Activated naive CD4-positive, alpha-beta T cell treated with anti-CD3 and anti-CD28 coated beads for 36 hours (primary cell): ENCODE measurements at regions of chr2 and their contacts with region 1.

Region 1: GRCh38 chr2:191245046-191245868 is at the start of gene MYO1B:
- DNase-seq: peak; percentile 79
- H3K4me3 Mint-ChIP-seq: peak within 1 kb of the TSS; percentile 82
- H3K27ac Mint-ChIP-seq: peak within 1 kb of the TSS; percentile 22
- H3K4me1 Mint-ChIP-seq: peaks cover 21% of the 10 kb centered on the region
- H3K27me3 Mint-ChIP-seq: no peaks in the 10 kb centered on the region
- total RNA-seq, gene MYO1B: 39.2 to 40.5 TPM

Region 2: DNA sequence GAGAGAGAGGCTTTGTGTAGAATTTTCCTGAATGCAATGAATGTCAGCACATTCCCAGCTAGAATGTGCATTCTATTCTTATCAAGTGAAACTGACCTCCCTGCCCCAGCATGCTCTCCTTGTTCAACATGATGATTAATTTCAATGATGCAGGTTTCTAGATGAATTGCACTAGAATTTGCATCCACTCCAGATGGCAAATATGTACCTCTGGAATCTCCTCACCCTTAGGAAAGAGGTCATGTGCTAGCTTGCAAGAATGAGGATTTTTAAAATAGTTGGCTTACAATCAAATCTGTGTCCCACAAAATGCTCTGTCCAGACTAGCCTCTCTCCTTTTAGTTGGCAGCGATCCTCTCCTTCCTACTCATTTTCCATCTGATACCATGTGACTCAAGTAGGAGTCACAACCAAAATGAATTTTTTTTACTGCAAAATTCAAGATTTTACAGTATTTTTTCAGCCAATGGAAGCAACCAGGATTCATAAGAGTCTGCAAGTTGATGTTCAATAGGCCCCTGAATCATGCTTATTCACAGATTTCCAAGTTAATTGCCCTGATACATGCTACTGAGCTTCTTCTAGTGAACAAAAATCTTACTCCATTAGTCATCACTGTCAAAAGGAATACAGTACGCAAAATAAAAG is 73.4 kb before region 1 on chr2:
- CTCF ChIA-PET with region 1: no interaction called
- intact Hi-C with region 1: loop called (anchors 2 kb)
- DNase-seq: no peak
- H3K4me3 Mint-ChIP-seq: no peak overlapping the region
- H3K27ac Mint-ChIP-seq: peak overlapping the region; percentile 38
- H3K4me1 Mint-ChIP-seq: peaks cover 75% of the 10 kb centered on the region
- H3K27me3 Mint-ChIP-seq: no peaks in the 10 kb centered on the region

Region 3: GRCh38 chr2:191369036-191369435 is 123.8 kb after region 1 on chr2:
- CTCF ChIA-PET with region 1: no interaction called
- intact Hi-C with region 1: loop called (anchors 5 kb)
- DNase-seq: no peak
- H3K4me3 Mint-ChIP-seq: no peak overlapping the region
- H3K27ac Mint-ChIP-seq: no peak overlapping the region
- H3K4me1 Mint-ChIP-seq: no peaks in the 10 kb centered on the region
- H3K27me3 Mint-ChIP-seq: no peaks in the 10 kb centered on the region

Region 4: DNA sequence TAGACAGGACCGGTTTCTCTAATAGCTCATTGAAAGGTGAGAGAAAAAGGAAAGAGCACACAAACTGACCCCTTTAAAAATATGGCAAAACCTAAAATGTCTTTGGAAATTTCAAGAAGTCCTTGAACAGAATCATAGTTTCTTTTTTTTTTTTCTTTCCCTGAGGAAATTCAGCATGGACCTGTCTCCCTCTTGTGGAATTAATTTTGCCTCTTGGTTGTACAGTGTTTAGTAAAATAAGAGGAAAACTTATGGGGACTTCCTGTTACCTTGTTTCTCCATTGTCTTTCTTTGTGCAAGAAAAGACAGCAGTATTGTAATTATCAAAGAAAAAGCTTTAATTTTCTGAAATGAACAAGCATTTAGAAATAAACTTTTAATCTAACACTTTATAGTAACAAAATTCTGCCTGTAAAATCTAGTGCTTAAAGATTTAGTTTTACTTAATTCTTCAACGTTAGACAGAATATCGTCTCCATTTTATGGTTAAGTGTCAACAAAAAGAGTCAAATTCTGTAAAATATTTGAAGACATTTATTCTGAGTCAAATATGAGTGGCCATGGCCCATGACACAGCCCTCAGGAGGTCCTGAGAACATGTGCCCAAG is 256.4 kb after region 1 on chr2:
- CTCF ChIA-PET with region 1: interaction called, 4 read pairs
- intact Hi-C with region 1: loop called (anchors 2 kb)
- DNase-seq: no peak
- H3K4me3 Mint-ChIP-seq: no peak overlapping the region
- H3K27ac Mint-ChIP-seq: no peak overlapping the region
- H3K4me1 Mint-ChIP-seq: no peaks in the 10 kb centered on the region
- H3K27me3 Mint-ChIP-seq: peaks cover 3% of the 10 kb centered on the region

Region 5: GRCh38 chr2:191521608-191522208 is 276.5 kb after region 1 on chr2:
- CTCF ChIA-PET with region 1: interaction called, 4 read pairs
- intact Hi-C with region 1: loop called (anchors 2 kb)
- DNase-seq: no peak
- H3K4me3 Mint-ChIP-seq: no peak overlapping the region
- H3K27ac Mint-ChIP-seq: no peak overlapping the region
- H3K4me1 Mint-ChIP-seq: no peaks in the 10 kb centered on the region
- H3K27me3 Mint-ChIP-seq: no peaks in the 10 kb centered on the region